ENCODE measurements at regions of chr18 and their contacts with region 1.

Region 1: DNA sequence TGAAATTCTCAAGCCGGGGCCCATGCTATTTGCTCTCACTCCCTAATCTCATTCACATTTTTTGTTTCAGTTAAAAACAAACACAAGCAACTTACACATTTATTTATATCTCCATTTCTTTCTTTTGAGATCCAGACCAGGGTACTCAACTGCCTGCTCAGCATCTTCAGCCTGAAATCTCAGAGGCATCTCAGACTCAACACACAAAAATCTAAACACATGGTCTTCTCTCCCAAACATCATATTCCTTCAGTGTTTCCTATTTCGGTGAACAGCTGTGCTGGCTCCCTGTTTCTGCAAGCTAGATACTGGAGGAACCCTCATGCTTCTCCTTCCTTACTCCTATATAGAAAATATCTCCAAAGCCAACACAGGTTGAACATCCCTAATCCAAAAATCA is 11.3 kb upstream of the RTTN start:
- DNase-seq: no peak
- ATAC-seq: no peak
- H3K4me3 ChIP-seq: no peak overlapping the region
- H3K4me3 Mint-ChIP-seq: no peak overlapping the region
- H3K27ac ChIP-seq: no peak overlapping the region
- H3K27ac Mint-ChIP-seq: no peak overlapping the region
- H3K4me1 ChIP-seq: no peaks in the 10 kb centered on the region
- H3K4me1 Mint-ChIP-seq: peaks cover 0 to 2% (median 0%) of the 10 kb centered on the region in 3 donors
- H3K27me3 ChIP-seq: peaks cover 0 to 8% of the 10 kb centered on the region in 2 experiments
- H3K27me3 Mint-ChIP-seq: peaks cover 43 to 56% of the 10 kb centered on the region in 2 donors

Region 2: GRCh38 chr18:70154591-70155194 is 62.1 kb before region 1 on chr18:
- CTCF ChIA-PET with region 1: no interaction called
- POLR2A ChIA-PET with region 1: no interaction called
- DNase-seq: no peak
- ATAC-seq: no peak
- H3K4me3 ChIP-seq: no peak overlapping the region
- H3K4me3 Mint-ChIP-seq: no peak overlapping the region
- H3K27ac ChIP-seq: no peak overlapping the region
- H3K27ac Mint-ChIP-seq: no peak overlapping the region
- H3K4me1 ChIP-seq: no peaks in the 10 kb centered on the region
- H3K4me1 Mint-ChIP-seq: peaks cover 8 to 20% (median 15%) of the 10 kb centered on the region in 3 donors
- H3K27me3 ChIP-seq: no peaks in the 10 kb centered on the region
- H3K27me3 Mint-ChIP-seq: no peaks in the 10 kb centered on the region

Region 3: DNA sequence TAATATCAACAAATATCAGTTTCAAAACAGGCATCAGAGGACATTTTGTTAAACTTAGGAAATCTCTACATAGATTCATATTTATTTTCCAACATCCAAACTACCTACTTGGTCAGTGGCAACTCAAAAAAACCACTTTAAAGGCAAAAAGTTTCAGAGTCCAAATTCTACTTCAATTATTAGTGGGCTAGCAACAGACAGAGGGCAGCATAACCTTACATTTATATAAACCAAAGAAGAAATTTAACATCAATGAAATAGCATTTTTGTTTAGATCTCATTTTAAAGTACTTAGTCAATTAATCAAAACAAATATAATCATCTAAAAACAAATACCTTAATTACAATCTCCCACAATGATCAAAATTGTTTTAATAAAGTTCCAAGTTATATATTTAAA is 44.6 kb before region 1 on chr18:
- CTCF ChIA-PET with region 1: no interaction called
- POLR2A ChIA-PET with region 1: interaction called in 1 of 2 experiments, 13 read pairs
- DNase-seq: no peak
- ATAC-seq: no peak
- H3K4me3 ChIP-seq: no peak overlapping the region
- H3K4me3 Mint-ChIP-seq: no peak overlapping the region
- H3K27ac ChIP-seq: no peak overlapping the region
- H3K27ac Mint-ChIP-seq: no peak overlapping the region
- H3K4me1 ChIP-seq: peaks cover 0 to 2% of the 10 kb centered on the region in 2 experiments
- H3K4me1 Mint-ChIP-seq: no peaks in the 10 kb centered on the region
- H3K27me3 ChIP-seq: no peaks in the 10 kb centered on the region
- H3K27me3 Mint-ChIP-seq: no peaks in the 10 kb centered on the region

Measured in T-cell (primary cell).